Heart left ventricle (tissue), 16 donors: ENCODE measurements at regions of chr2 and their contacts with region 1.

Region 1: GRCh38 chr2:189498205-189498604 is 56.9 kb downstream of the WDR75 start:
- DNase-seq: peak in 1 of 5 donors; percentile 32
- ATAC-seq: peak in 1 of 4 donors; percentile 37
- H3K4me3 ChIP-seq: no peak overlapping the region
- H3K27ac ChIP-seq: no peak overlapping the region
- H3K4me1 ChIP-seq: peaks cover 0 to 6% (median 0%) of the 10 kb centered on the region in 12 donors
- H3K27me3 ChIP-seq: no peaks in the 10 kb centered on the region
- CTCF ChIP-seq: peak in 8 of 12 donors; percentile 18 to 52 (median 27)
- POLR2A ChIP-seq: no peak

Region 2: GRCh38 chr2:189066037-189066436 is 432.2 kb before region 1 on chr2:
- intact Hi-C with region 1: no loop called
- DNase-seq: no peak
- ATAC-seq: no peak
- H3K4me3 ChIP-seq: no peak overlapping the region
- H3K27ac ChIP-seq: no peak overlapping the region
- H3K4me1 ChIP-seq: peaks cover 0 to 7% (median 0%) of the 10 kb centered on the region in 12 donors
- H3K27me3 ChIP-seq: no peaks in the 10 kb centered on the region
- CTCF ChIP-seq: no peak
- POLR2A ChIP-seq: no peak

Region 3: GRCh38 chr2:189633392-189633811 is 135.2 kb after region 1 on chr2:
- intact Hi-C with region 1: loop called in 1 of 10 experiments (anchors 10 kb)
- DNase-seq: no peak
- ATAC-seq: peak in 1 of 4 donors; percentile 41
- H3K4me3 ChIP-seq: no peak overlapping the region
- H3K27ac ChIP-seq: no peak overlapping the region
- H3K4me1 ChIP-seq: peaks cover 0 to 11% (median 0%) of the 10 kb centered on the region in 12 donors
- H3K27me3 ChIP-seq: no peaks in the 10 kb centered on the region
- CTCF ChIP-seq: peak; percentile 23 to 60 (median 50)
- POLR2A ChIP-seq: no peak

Region 4: DNA sequence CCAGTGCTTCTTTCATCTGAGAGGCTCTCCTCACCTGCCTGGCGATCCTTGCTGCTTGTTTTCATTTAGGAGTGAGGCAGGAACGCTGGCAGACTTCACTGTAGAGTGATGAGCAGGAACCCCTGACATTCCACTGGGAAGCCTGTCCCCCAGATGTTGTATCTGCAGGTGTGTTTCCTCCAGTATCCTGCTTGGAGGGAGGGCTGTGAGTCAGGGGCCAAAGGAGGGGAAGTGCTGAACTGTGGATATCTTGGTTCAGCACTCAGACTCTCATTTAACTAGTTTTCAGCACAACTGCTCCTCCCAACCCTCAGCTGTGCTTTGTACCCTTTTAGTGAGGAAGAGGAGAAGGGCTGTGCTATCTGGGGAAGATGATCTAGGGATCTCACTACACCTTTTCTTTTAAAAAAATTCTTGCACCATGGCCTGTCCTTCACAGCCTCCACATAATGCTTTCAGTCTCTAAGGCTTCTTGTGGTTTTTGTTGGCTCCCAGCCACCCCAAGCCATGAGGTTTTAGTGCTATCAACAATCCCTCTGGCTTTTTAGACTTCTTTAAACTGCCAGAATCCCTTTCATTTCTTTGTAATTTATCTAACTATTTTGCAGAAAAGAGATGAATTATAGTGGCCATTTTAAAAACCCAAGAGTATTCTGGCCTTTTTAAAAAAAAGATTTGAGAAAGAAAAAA is 187.5 kb after region 1 on chr2:
- intact Hi-C with region 1: no loop called
- DNase-seq: peak in 3 of 5 donors; percentile 27 to 54 (median 33)
- ATAC-seq: peak in 3 of 4 donors; percentile 13 to 47 (median 41)
- H3K4me3 ChIP-seq: no peak overlapping the region
- H3K27ac ChIP-seq: no peak overlapping the region
- H3K4me1 ChIP-seq: peaks cover 0 to 22% (median 6%) of the 10 kb centered on the region in 12 donors
- H3K27me3 ChIP-seq: no peaks in the 10 kb centered on the region
- CTCF ChIP-seq: no peak
- POLR2A ChIP-seq: no peak